ENCODE measurements at regions of chr13 and their contacts with region 1.

Region 1: DNA sequence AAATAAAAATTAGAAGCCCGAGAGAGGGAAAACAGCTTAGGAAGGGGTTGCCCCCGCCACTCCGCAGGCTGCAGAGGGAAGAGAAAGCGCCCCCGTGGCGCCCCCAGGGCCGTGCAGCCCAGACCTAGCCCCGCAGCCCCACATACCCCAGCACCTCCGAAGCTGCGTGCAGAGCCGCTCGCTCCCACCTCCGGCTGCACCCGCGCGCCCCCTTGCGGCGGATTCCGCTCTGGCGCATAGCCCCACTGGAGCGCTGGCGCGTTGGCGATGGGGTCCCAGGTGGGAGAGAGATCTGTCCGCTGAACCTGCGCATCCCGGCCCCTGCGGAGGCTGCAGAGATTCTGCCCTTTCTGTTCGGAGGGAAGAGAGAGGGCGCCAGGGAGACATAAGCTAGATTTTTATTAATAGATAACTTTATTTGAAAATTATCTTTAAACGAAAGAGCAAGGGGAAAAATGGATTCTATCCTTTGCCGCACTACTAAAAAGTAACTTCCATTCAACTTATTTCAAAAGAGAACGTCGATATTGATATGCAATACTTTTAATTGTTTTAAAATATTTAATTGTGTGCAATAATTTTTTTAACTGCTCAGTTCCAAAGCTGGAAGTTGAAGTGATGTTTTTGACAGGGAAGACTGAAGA is 11.7 kb upstream of the CLN5 start:
- DNase-seq: peak; percentile 72 to 93 (median 86)
- ATAC-seq: peak; percentile 98
- H3K4me3 ChIP-seq: peak overlapping the region in 1 of 2 experiments; percentile 21
- H3K4me3 Mint-ChIP-seq: peak overlapping the region; percentile 57
- H3K27ac ChIP-seq: no peak overlapping the region
- H3K27ac Mint-ChIP-seq: no peak overlapping the region
- H3K4me1 ChIP-seq: peaks cover 4% of the 10 kb centered on the region
- H3K4me1 Mint-ChIP-seq: peaks cover 9% of the 10 kb centered on the region
- H3K27me3 ChIP-seq: peaks cover 4 to 23% of the 10 kb centered on the region in 2 experiments
- H3K27me3 Mint-ChIP-seq: peaks cover 35% of the 10 kb centered on the region
- CTCF ChIP-seq: peak; percentile 96

Region 2: DNA sequence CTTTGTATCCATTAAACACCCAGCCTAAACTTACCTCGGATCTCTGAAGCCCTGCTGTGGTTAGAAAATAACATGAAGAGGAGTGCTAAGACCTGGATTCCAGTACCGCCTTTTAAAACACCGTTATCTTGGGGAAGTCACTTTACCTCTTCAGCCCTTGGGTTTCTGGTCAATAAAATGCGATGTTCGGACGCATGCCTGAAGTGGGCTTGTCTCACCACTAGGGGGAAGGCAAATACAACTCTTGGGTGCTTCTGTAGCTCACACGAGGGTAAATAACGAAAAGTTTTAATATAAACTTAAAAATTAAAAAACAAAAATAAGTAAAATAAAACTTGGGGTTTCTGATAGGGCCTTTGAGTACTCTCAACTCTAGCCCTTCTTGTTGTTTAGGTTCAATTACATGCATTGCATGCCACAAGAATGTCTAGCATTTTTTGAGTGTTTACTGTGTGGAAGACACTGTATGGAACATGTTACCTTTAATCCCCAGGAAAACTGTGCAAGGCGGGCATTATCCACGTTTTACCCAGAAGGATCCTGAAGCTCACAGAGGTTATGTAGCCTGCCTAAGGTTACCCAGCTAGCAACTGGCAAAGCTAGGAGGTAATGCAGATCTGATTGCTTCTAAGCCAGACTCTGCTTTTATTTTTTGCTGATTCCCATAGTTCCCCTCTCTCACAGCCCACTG is 1103.7 kb before region 1 on chr13:
- CTCF ChIA-PET with region 1: interaction called, 7 read pairs
- POLR2A ChIA-PET with region 1: no interaction called
- intact Hi-C with region 1: loop called (anchors 1 to 5 kb)
- DNase-seq: peak; percentile 8 to 69 (median 46)
- ATAC-seq: peak; percentile 95
- H3K4me3 ChIP-seq: no peak overlapping the region
- H3K4me3 Mint-ChIP-seq: peak overlapping the region; percentile 52
- H3K27ac ChIP-seq: no peak overlapping the region
- H3K27ac Mint-ChIP-seq: no peak overlapping the region
- H3K4me1 ChIP-seq: no peaks in the 10 kb centered on the region
- H3K4me1 Mint-ChIP-seq: peaks cover 17% of the 10 kb centered on the region
- H3K27me3 ChIP-seq: no peaks in the 10 kb centered on the region
- H3K27me3 Mint-ChIP-seq: peaks cover 2% of the 10 kb centered on the region
- CTCF ChIP-seq: peak; percentile 87

Region 3: GRCh38 chr13:76667551-76667950 is 312.6 kb before region 1 on chr13:
- CTCF ChIA-PET with region 1: interaction called, 10 read pairs
- POLR2A ChIA-PET with region 1: no interaction called
- intact Hi-C with region 1: loop called (anchors 1 to 5 kb)
- DNase-seq: peak in 4 of 9 experiments; percentile 5 to 54 (median 27)
- ATAC-seq: peak; percentile 36
- H3K4me3 ChIP-seq: no peak overlapping the region
- H3K4me3 Mint-ChIP-seq: no peak overlapping the region
- H3K27ac ChIP-seq: no peak overlapping the region
- H3K27ac Mint-ChIP-seq: no peak overlapping the region
- H3K4me1 ChIP-seq: no peaks in the 10 kb centered on the region
- H3K4me1 Mint-ChIP-seq: no peaks in the 10 kb centered on the region
- H3K27me3 ChIP-seq: no peaks in the 10 kb centered on the region
- H3K27me3 Mint-ChIP-seq: no peaks in the 10 kb centered on the region
- CTCF ChIP-seq: no peak

Region 4: GRCh38 chr13:76991796-76992547 is 11.8 kb after region 1 on chr13 and contains the start of gene CLN5:
- CTCF ChIA-PET with region 1: interaction called, 32 read pairs
- POLR2A ChIA-PET with region 1: interaction called, 14 read pairs
- intact Hi-C with region 1: loop called in 1 of 2 experiments (anchors 1 kb)
- DNase-seq: peak; percentile 91 to 98 (median 94)
- ATAC-seq: peak; percentile 83
- H3K4me3 ChIP-seq: peak within 1 kb of the TSS; percentile 72 to 86
- H3K4me3 Mint-ChIP-seq: peak within 1 kb of the TSS; percentile 95
- H3K27ac ChIP-seq: peak within 1 kb of the TSS; percentile 84 to 97
- H3K27ac Mint-ChIP-seq: peak within 1 kb of the TSS; percentile 99
- H3K4me1 ChIP-seq: peaks cover 31% of the 10 kb centered on the region
- H3K4me1 Mint-ChIP-seq: peaks cover 53% of the 10 kb centered on the region
- H3K27me3 ChIP-seq: peaks cover 0 to 13% of the 10 kb centered on the region in 2 experiments
- H3K27me3 Mint-ChIP-seq: peaks cover 12% of the 10 kb centered on the region
- CTCF ChIP-seq: no peak
- total RNA-seq, gene CLN5: 23.3 to 23.4 TPM

Region 5: GRCh38 chr13:77002590-77003190 is 22.5 kb after region 1 on chr13:
- CTCF ChIA-PET with region 1: interaction called, 9 read pairs
- POLR2A ChIA-PET with region 1: interaction called, 4 read pairs
- intact Hi-C with region 1: loop called in 1 of 2 experiments (anchors 1 kb)
- DNase-seq: peak in 2 of 9 experiments; percentile 28 to 39
- ATAC-seq: no peak
- H3K4me3 ChIP-seq: no peak overlapping the region
- H3K4me3 Mint-ChIP-seq: no peak overlapping the region
- H3K27ac ChIP-seq: no peak overlapping the region
- H3K27ac Mint-ChIP-seq: peak overlapping the region; percentile 5
- H3K4me1 ChIP-seq: peaks cover 23% of the 10 kb centered on the region
- H3K4me1 Mint-ChIP-seq: peaks cover 53% of the 10 kb centered on the region
- H3K27me3 ChIP-seq: no peaks in the 10 kb centered on the region
- H3K27me3 Mint-ChIP-seq: no peaks in the 10 kb centered on the region
- CTCF ChIP-seq: peak; percentile 66